Calu3 (cell line): ENCODE measurements at regions of chr6 and their contacts with region 1.

Region 1: GRCh38 chr6:104795363-104795762 is 64.4 kb downstream of the HACE1 start:
- DNase-seq: no peak
- H3K4me3 Mint-ChIP-seq: no peak overlapping the region
- H3K27ac Mint-ChIP-seq: no peak overlapping the region
- H3K4me1 Mint-ChIP-seq: no peaks in the 10 kb centered on the region
- H3K27me3 Mint-ChIP-seq: no peaks in the 10 kb centered on the region
- CTCF ChIP-seq: no peak

Region 2: DNA sequence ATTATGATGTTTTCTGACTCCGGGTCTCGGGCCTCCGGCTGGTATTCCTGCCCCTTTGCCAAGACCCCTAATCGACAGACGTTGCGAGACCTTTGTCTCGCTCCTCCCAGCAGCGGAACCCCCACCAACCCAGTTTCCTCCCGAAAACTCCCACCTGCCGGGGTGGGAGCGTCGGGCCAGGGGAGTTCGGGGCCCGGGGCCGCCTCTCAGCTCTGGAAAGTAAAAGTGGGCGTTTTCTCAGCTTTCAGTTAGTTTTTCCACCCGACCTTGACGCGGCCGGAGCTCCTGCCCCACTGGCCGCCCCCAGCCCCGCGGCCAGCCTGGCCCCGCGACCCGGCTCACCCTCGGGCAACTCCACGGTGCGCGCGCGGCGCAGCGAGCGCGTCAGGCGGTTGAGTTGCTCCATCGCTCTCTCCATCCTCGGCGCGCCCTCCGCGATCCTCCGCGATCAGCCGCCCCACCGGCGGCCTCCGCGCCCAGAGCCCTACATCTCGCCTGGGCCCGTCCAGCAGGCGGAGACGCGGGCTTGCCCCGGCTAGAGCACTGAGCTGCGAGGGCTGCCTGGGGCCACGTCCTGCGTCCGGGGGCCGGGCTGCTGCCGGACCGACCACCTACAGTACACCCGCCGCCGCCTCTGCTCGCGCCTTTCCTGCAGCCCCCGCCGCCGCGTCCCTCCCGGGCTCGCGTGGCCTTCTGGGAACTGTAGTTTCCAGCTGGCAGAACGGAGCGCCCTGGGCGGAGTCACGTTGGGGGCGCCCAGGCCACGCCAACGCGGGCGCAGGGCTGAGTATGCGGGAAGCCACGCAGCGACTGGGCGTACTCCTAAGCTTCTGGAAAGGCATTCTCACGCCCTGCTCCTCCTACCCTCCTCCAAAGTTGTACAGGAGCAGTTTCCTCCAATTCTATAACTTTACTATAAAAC is 64.1 kb after region 1 on chr6 and contains the start of gene HACE1:
- CTCF ChIA-PET with region 1: no interaction called
- intact Hi-C with region 1: loop called (anchors 5 kb)
- DNase-seq: peak; percentile 88
- H3K4me3 Mint-ChIP-seq: peak within 1 kb of the TSS; percentile 92
- H3K27ac Mint-ChIP-seq: no peak within 1 kb of the TSS
- H3K4me1 Mint-ChIP-seq: peaks cover 9% of the 10 kb centered on the region
- H3K27me3 Mint-ChIP-seq: no peaks in the 10 kb centered on the region
- CTCF ChIP-seq: no peak
- total RNA-seq, gene HACE1: 7.9 and 12.5 TPM in 2 replicates